ENCODE measurements at regions of chr19 and their contacts with region 1.

Region 1: DNA sequence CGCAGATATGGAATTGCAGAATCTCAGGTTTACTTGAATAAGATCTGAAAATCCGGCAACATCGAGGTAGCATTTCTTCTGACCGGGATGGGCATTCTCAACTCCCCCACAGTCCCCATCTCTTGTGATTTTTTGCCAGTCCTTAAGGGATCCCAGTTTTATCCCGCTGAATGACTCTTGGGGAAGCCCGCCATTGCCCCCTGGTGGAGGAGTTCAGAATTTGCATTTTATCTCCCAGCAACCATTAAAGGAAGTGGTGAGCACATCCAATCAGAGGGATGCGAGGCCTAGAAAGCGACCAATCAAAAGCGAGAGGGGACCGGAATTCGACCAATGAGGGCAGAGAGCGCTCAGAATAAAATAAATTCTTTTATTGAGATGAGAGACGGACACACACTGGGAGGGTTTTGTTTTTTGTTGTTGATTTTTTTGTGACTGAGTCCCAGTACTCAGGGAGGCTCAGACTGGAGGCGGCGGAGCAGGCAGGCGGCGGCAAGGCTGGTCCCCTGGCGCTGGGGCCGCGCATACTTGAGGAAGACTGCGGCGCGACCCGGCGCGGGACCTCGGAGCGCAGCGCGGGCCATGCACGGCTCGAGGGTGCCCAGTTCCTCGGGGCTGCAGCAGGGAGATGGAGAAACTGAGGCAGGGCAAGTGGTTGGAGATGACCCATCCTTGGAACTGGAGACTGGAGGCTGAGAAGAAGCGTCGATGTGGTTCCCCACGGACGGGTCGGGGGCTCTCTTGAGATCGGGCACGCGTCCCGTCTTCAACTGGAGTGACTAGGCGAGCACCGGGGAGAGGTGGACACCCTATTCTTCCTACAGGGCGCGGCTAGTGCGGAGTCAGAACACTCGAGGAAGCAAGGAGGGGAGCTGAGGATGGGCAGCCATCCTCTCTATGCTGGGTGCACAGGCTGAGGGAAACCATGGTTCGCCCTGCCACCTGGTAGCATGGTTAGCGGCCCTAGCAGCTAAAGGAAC is 4.0 kb upstream of the TTC9B start:
- DNase-seq: peak; percentile 100
- ATAC-seq: peak; percentile 23
- H3K4me3 ChIP-seq: no peak overlapping the region
- H3K27ac ChIP-seq: no peak overlapping the region
- H3K4me1 ChIP-seq: peaks cover 39% of the 10 kb centered on the region
- H3K27me3 ChIP-seq: peaks cover 26% of the 10 kb centered on the region
- CTCF ChIP-seq: no peak

Region 2: GRCh38 chr19:39590265-39590664 is 631.9 kb before region 1 on chr19:
- CTCF ChIA-PET with region 1: interaction called, 12 read pairs
- POLR2A ChIA-PET with region 1: no interaction called
- in situ Hi-C with region 1: no loop called
- intact Hi-C with region 1: no loop called
- DNase-seq: no peak
- ATAC-seq: no peak
- H3K4me3 ChIP-seq: no peak overlapping the region
- H3K27ac ChIP-seq: no peak overlapping the region
- H3K4me1 ChIP-seq: no peaks in the 10 kb centered on the region
- H3K27me3 ChIP-seq: peaks cover 77% of the 10 kb centered on the region
- CTCF ChIP-seq: peak; percentile 33; the same call in 1 of the 2 replicates

Region 3: GRCh38 chr19:40147693-40148347 is 74.3 kb before region 1 on chr19:
- CTCF ChIA-PET with region 1: interaction called, 153 read pairs
- POLR2A ChIA-PET with region 1: interaction called, 6 read pairs
- in situ Hi-C with region 1: no loop called
- intact Hi-C with region 1: no loop called
- DNase-seq: peak; percentile 100
- ATAC-seq: peak; percentile 87
- H3K4me3 ChIP-seq: peak overlapping the region; percentile 24 to 50
- H3K27ac ChIP-seq: peak overlapping the region; percentile 42
- H3K4me1 ChIP-seq: peaks cover 14% of the 10 kb centered on the region
- H3K27me3 ChIP-seq: no peaks in the 10 kb centered on the region
- CTCF ChIP-seq: no peak

Region 4: DNA sequence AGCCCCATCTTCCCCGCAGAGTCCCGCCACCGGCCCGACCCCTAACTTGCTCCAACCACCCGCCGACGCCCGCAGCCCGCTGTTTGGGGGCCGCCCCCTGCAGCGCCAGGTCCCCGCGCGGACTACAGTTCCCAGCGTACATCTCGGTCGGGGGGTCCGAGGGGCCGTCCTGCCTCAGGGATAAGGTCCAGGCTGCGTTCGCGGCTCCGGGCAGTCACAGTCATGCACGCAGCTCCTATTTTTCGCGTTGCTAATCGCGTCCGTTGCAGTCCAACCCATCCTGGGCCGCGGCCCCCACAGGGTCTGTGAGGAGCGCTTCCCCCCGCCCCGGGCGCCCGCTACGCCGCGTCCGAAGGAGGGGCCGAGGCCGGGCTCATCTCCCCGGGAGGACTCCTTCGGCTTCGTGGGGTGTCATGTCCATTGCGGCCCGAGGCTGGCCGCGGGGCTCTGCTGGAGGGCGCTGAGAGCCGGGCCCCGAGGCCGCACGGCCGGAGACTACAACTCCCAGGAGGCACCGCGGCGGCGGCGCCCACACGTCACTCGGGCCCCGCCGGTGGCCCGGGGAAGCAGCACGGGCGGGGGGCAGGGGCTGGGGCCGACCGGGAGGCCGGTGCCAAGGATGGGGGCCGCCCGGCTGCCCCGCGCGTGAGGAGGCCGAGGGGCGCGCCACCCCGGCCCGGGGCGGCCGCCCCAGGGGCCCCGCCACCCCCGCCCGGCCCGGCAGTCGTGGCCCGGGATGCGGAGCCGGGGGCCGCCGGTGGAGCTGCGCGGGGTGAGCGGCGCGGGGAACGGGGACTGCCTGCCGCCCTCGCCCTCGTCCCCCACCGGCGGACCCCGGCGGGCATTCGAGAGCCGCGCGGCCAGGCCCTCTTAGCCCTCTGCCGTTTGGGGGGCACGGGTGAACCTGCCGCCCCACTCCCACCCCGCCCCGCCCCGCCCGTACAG is 31.0 kb before region 1 on chr19 and contains the start of gene MAP3K10:
- CTCF ChIA-PET with region 1: interaction called, 43 read pairs
- POLR2A ChIA-PET with region 1: interaction called, 13 read pairs
- in situ Hi-C with region 1: loop called (anchors 5 kb)
- intact Hi-C with region 1: no loop called
- DNase-seq: peak; percentile 99
- ATAC-seq: peak; percentile 97
- H3K4me3 ChIP-seq: peak within 1 kb of the TSS; percentile 36 to 57
- H3K27ac ChIP-seq: peak within 1 kb of the TSS; percentile 49
- H3K4me1 ChIP-seq: peaks cover 23% of the 10 kb centered on the region
- H3K27me3 ChIP-seq: peaks cover 9% of the 10 kb centered on the region
- CTCF ChIP-seq: no peak
- total RNA-seq, gene MAP3K10: 255 TPM

Region 5: GRCh38 chr19:40257057-40257517 is 34.9 kb after region 1 on chr19:
- CTCF ChIA-PET with region 1: interaction called, 6 read pairs
- POLR2A ChIA-PET with region 1: interaction called, 12 read pairs
- in situ Hi-C with region 1: loop called (anchors 5 kb)
- intact Hi-C with region 1: no loop called
- DNase-seq: no peak
- ATAC-seq: peak; percentile 51
- H3K4me3 ChIP-seq: no peak overlapping the region
- H3K27ac ChIP-seq: no peak overlapping the region
- H3K4me1 ChIP-seq: peaks cover 12% of the 10 kb centered on the region
- H3K27me3 ChIP-seq: no peaks in the 10 kb centered on the region
- CTCF ChIP-seq: no peak

Region 6: DNA sequence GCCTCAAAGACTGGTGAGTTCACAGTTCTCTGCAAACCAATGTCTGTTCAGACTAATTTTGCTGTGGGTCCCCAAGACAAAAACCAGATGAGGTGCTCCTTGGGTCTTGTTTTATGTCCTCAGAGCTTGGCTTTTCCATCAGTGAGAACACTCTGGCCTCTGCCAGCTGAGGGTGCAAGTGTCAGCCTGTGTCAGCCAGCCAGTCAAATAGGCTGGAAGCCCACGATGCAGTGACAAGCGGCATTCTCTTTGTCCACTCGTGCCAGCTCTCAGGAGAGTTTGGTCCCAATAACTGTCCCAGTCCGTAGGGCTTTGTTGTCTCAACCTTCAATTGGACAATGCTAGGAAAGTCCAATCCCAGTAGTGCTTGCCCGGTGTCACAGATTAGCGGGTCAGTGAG is 72.4 kb after region 1 on chr19:
- CTCF ChIA-PET with region 1: interaction called, 12 read pairs
- POLR2A ChIA-PET with region 1: no interaction called
- in situ Hi-C with region 1: loop called (anchors 5 kb)
- intact Hi-C with region 1: no loop called
- DNase-seq: no peak
- ATAC-seq: peak; percentile 4
- H3K4me3 ChIP-seq: no peak overlapping the region
- H3K27ac ChIP-seq: no peak overlapping the region
- H3K4me1 ChIP-seq: no peaks in the 10 kb centered on the region
- H3K27me3 ChIP-seq: peaks cover 4% of the 10 kb centered on the region; the same call in 1 of the 2 replicates
- CTCF ChIP-seq: no peak

Measured in Panc1 (cell line).